Activated CD8-positive, alpha-beta T cell treated with anti-CD3 and anti-CD28 coated beads for 36 hours (primary cell): ENCODE measurements at regions of chr22 and their contacts with region 1.

Region 1: GRCh38 chr22:37148742-37149665 is 712 bp downstream of the IL2RB start:
- DNase-seq: no peak
- ATAC-seq: no peak
- H3K4me3 Mint-ChIP-seq: peak overlapping the region; percentile 87
- H3K27ac Mint-ChIP-seq: peak overlapping the region; percentile 93
- H3K4me1 Mint-ChIP-seq: peaks cover 60% of the 10 kb centered on the region
- H3K27me3 Mint-ChIP-seq: no peaks in the 10 kb centered on the region
- CTCF ChIP-seq: no peak

Region 2: GRCh38 chr22:37077884-37078485 is 71.0 kb before region 1 on chr22:
- CTCF ChIA-PET with region 1: interaction called, 13 read pairs
- POLR2A ChIA-PET with region 1: interaction called, 23 read pairs
- intact Hi-C with region 1: no loop called
- DNase-seq: peak; percentile 90
- ATAC-seq: no peak
- H3K4me3 Mint-ChIP-seq: peak overlapping the region; percentile 23
- H3K27ac Mint-ChIP-seq: peak overlapping the region; percentile 99
- H3K4me1 Mint-ChIP-seq: peaks cover 56% of the 10 kb centered on the region
- H3K27me3 Mint-ChIP-seq: peaks cover 16% of the 10 kb centered on the region
- CTCF ChIP-seq: peak; percentile 99

Region 3: GRCh38 chr22:37229805-37230672 is 81.0 kb after region 1 on chr22:
- CTCF ChIA-PET with region 1: no interaction called
- POLR2A ChIA-PET with region 1: interaction called, 11 read pairs
- intact Hi-C with region 1: no loop called
- DNase-seq: peak; percentile 98
- ATAC-seq: peak; percentile 61
- H3K4me3 Mint-ChIP-seq: peak overlapping the region; percentile 76
- H3K27ac Mint-ChIP-seq: peak overlapping the region; percentile 98
- H3K4me1 Mint-ChIP-seq: peaks cover 85% of the 10 kb centered on the region
- H3K27me3 Mint-ChIP-seq: no peaks in the 10 kb centered on the region
- CTCF ChIP-seq: no peak

Region 4: DNA sequence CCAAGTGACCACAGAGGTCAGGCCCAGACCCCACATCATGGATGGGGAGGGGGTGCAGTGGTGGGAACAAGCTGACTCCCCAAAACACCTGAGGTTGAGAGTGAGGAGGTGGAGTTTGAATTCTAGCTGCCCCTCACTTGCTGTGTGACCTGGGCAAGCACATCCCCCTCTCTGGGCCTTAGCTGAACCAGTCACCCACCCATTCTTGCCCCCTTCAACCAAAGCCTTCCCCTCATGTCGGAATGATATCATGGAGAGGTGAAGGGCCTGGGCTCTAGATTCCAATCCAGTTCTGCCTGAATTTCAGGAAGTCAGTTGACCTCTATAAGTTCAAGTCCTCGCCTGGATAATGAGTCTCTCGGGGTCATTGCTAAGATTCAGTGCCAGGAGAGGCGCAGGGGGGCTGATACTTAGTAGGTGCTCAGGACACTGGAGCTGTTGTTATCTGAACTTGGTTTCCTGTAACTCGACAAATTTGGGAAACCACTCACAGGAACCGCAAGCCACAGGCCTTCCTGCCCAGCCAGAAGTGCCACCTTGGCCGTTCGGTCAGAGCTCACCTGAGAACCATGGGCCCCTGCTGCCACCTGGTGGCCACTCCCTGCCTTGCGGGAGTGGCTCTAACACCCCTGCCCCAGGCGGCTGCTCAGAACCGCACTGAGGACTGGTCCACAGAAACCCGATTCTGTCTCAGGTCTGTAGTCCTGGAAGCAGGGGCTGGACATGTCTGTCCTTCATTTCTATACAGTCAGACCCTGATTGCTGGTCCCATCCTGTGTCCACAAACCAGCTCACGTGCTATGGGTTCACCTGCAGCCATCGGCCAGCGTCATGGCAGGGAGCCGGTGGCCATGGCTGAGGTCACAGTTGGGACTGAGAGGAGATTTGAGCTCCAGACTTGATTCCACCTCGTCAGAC is 418.2 kb after region 1 on chr22:
- CTCF ChIA-PET with region 1: no interaction called
- POLR2A ChIA-PET with region 1: no interaction called
- intact Hi-C with region 1: no loop called
- DNase-seq: peak; percentile 97
- ATAC-seq: peak; percentile 89
- H3K4me3 Mint-ChIP-seq: peak overlapping the region; percentile 49
- H3K27ac Mint-ChIP-seq: peak overlapping the region; percentile 85
- H3K4me1 Mint-ChIP-seq: peaks cover 26% of the 10 kb centered on the region
- H3K27me3 Mint-ChIP-seq: peaks cover 18% of the 10 kb centered on the region
- CTCF ChIP-seq: peak; percentile 92